Heart left ventricle (tissue), 16 donors: ENCODE measurements at regions of chr2 and their contacts with region 1.

Region 1: DNA sequence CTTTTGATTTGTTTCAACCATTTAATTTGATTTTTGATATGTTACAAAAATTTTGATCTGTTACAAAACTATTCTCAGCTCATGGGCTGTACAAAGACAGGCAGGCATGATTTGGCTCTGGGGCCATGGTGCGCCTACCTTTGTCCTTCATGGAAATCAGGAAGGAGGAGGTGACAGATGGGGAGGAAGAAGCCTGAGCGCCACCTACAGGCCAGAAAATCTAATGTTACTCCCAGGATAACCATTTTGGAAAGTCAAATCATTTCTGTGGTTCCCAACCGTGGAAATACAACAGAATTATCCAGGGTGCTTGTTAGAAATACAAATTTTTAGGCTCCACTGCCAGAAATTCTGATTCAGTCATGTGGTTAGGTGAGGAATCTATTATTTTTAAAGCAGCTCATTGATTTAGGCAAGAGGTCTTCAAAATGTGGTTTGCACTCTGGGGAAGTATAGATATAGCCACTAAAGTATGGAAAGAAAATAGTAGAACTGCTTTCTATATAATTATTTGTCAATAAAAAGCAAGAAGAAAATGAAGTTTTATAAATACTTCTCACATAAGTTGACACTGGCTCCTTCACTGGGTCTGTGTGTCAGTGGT is 93.9 kb downstream of the EVA1A start:
- DNase-seq: no peak
- ATAC-seq: no peak
- H3K4me3 ChIP-seq: no peak overlapping the region
- H3K27ac ChIP-seq: no peak overlapping the region
- H3K4me1 ChIP-seq: no peaks in the 10 kb centered on the region
- H3K27me3 ChIP-seq: peaks cover 0 to 28% (median 0%) of the 10 kb centered on the region in 9 donors
- CTCF ChIP-seq: peak in 5 of 12 donors; percentile 7 to 38 (median 25)
- POLR2A ChIP-seq: no peak

Region 2: DNA sequence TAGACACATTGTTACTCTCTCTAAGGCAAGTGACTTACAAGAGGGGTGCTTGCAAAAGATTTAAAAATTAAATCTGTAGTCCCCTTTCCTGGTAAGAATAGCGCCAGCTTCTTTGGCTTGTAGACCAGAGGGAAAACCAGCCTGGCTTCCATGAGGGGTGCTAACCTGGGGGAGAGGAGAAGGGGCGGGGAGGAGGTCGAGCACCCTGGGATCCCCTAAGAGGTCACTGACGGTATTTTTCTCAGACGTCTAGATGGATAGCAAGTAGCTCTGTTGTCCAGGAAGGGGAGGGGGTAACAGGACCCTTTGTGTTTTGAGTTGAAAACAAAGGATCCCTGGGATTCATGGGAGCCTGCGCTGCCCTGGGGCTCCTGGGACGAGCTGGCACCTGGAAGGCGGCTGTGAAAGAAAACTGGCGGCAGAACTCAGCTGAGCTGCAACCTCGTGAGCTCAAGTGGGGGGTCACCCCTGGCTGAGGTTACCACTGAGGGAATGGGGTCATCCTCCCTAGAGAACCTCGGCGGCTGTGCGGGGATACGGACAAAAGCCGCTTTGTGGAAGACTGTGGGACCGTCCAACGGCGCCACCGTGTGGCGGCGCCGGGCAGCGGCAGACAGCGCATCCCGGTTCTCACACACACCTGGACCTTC is 142.0 kb after region 1 on chr2:
- intact Hi-C with region 1: loop called (anchors 1 to 5 kb)
- DNase-seq: peak; percentile 37 to 69 (median 49)
- ATAC-seq: peak; percentile 74 to 91 (median 79)
- H3K4me3 ChIP-seq: peak overlapping the region in 7 of 12 donors; percentile 3 to 32 (median 19)
- H3K27ac ChIP-seq: no peak overlapping the region
- H3K4me1 ChIP-seq: peaks cover 0 to 5% (median 2%) of the 10 kb centered on the region in 12 donors
- H3K27me3 ChIP-seq: peaks cover 0 to 42% (median 18%) of the 10 kb centered on the region in 9 donors
- CTCF ChIP-seq: peak; percentile 83 to 97 (median 91)
- POLR2A ChIP-seq: no peak

Region 3: GRCh38 chr2:75627895-75628504 is 161.2 kb after region 1 on chr2:
- intact Hi-C with region 1: loop called in 6 of 10 experiments (anchors 1 to 5 kb)
- DNase-seq: peak; percentile 52 to 70 (median 67)
- ATAC-seq: peak in 3 of 4 donors; percentile 45 to 79 (median 77)
- H3K4me3 ChIP-seq: no peak overlapping the region
- H3K27ac ChIP-seq: no peak overlapping the region
- H3K4me1 ChIP-seq: peaks cover 0 to 8% (median 0%) of the 10 kb centered on the region in 12 donors
- H3K27me3 ChIP-seq: peaks cover 0 to 3% (median 0%) of the 10 kb centered on the region in 9 donors
- CTCF ChIP-seq: peak; percentile 77 to 94 (median 83)
- POLR2A ChIP-seq: no peak